ENCODE measurements at regions of chr6 and their contacts with region 1.

Region 1: DNA sequence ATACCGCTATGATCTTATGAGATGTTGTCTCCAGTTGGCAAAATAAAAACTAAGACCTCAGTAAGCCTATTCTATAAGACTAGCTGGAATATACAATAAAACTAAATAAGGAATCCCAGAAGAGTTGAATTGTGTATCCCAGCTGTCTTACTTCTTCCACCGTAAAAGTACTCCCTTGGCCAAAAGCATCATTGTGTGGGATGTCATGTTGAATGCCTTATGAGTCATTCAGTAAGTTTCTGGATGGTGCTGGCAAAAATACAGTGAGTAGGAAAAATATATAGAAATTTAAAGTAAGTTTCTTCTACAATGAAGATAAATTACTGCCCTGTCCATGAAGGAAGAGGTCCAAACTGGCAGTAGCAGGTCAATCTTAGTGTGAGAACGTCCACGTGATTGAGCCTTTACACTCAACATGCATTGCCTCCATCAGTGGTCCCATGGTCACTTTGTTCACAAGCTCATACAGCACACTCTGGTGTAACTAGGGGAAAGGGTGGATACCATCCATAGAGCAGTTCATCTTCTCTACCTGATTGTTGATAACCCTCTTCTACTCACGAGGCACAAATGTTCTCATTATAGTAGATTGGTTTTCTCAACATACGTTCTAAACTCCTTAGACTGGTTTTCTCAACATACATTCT is 13.7 kb upstream of the ZNF318 start:
- DNase-seq: no peak
- ATAC-seq: no peak
- H3K4me3 ChIP-seq: no peak overlapping the region
- H3K27ac ChIP-seq: no peak overlapping the region
- H3K4me1 ChIP-seq: no peaks in the 10 kb centered on the region
- H3K27me3 ChIP-seq: no peaks in the 10 kb centered on the region
- CTCF ChIP-seq: no peak
- POLR2A ChIP-seq: no peak

Region 2: GRCh38 chr6:43355862-43356590 is 27.1 kb before region 1 on chr6:
- in situ Hi-C with region 1: no loop called
- intact Hi-C with region 1: loop called (anchors 1 kb)
- DNase-seq: no peak
- ATAC-seq: no peak
- H3K4me3 ChIP-seq: no peak overlapping the region
- H3K27ac ChIP-seq: no peak overlapping the region
- H3K4me1 ChIP-seq: no peaks in the 10 kb centered on the region
- H3K27me3 ChIP-seq: no peaks in the 10 kb centered on the region
- CTCF ChIP-seq: no peak
- POLR2A ChIP-seq: no peak